Colonic mucosa (tissue), 4 donors: ENCODE measurements at regions of chr3 and their contacts with region 1.

Region 1: GRCh38 chr3:177777699-177778098 is 580.4 kb upstream of the TBL1XR1 start:
- DNase-seq: peak; percentile 72
- H3K4me3 ChIP-seq: no peak overlapping the region
- H3K27ac ChIP-seq: no peak overlapping the region
- H3K4me1 ChIP-seq: no peaks in the 10 kb centered on the region
- H3K27me3 ChIP-seq: no peaks in the 10 kb centered on the region
- CTCF ChIP-seq: peak; percentile 55

Region 2: GRCh38 chr3:177050501-177051237 is 727.0 kb before region 1 on chr3:
- intact Hi-C with region 1: loop called (anchors 10 kb)
- DNase-seq: no peak
- H3K4me3 ChIP-seq: no peak overlapping the region
- H3K27ac ChIP-seq: no peak overlapping the region
- H3K4me1 ChIP-seq: no peaks in the 10 kb centered on the region
- H3K27me3 ChIP-seq: no peaks in the 10 kb centered on the region
- CTCF ChIP-seq: peak; percentile 27

Region 3: DNA sequence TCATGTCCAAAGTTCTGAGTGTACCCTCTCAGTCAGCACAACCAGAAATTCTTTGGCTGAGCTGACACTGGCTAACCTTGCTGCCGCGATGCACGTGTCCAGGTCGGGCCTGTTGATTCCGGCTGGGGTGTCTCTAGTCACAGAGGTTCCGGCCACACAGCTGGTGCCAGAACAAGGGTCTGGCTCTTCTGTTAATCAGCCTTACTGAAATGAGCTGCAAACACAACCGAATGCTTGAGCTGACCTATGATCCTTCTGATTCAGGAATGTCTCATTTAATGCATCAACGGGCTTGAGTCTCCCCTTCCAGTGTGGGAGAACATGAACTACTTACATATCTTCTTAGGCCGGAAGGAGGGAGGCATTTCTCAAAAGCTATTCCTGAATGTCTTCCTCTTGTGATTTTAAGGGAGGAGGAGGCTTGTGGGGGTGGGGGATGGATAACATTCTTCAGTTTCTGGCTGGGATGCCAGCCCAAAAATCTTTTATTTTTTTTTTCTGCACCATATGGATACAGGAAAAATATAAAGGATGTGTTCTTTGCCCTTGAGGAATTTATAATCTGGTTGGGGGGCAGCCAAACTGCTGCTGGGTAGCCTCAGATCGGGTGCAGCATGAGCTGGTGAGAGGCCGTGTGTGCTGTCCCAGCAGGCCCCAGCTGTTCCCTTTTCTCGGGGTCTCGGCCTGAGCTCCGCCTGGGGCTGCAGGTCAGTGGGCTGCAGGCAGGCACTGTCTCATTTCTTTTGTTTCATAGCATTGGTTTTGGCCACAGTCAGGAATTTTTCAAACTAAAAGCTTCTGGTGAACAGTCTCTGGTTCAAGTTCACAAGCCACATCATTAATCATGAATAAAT is 261.3 kb before region 1 on chr3:
- intact Hi-C with region 1: loop called (anchors 10 kb)
- DNase-seq: no peak
- H3K4me3 ChIP-seq: no peak overlapping the region
- H3K27ac ChIP-seq: no peak overlapping the region
- H3K4me1 ChIP-seq: no peaks in the 10 kb centered on the region
- H3K27me3 ChIP-seq: no peaks in the 10 kb centered on the region
- CTCF ChIP-seq: no peak